Activated naive CD4-positive, alpha-beta T cell treated with anti-CD3 and anti-CD28 coated beads for 36 hours (primary cell): ENCODE measurements at regions of chr3 and their contacts with region 1.

Region 1: GRCh38 chr3:160027541-160028195 is 39.0 kb downstream of the IL12A start:
- DNase-seq: peak; percentile 24
- H3K4me3 Mint-ChIP-seq: no peak overlapping the region
- H3K27ac Mint-ChIP-seq: peak overlapping the region; percentile 32
- H3K4me1 Mint-ChIP-seq: peaks cover 12% of the 10 kb centered on the region
- H3K27me3 Mint-ChIP-seq: no peaks in the 10 kb centered on the region

Region 2: GRCh38 chr3:159978353-159978752 is 49.3 kb before region 1 on chr3:
- CTCF ChIA-PET with region 1: no interaction called
- intact Hi-C with region 1: no loop called
- DNase-seq: no peak
- H3K4me3 Mint-ChIP-seq: no peak overlapping the region
- H3K27ac Mint-ChIP-seq: no peak overlapping the region
- H3K4me1 Mint-ChIP-seq: no peaks in the 10 kb centered on the region
- H3K27me3 Mint-ChIP-seq: peaks cover 17% of the 10 kb centered on the region

Region 3: GRCh38 chr3:160129459-160130061 is 101.9 kb after region 1 on chr3:
- CTCF ChIA-PET with region 1: interaction called, 4 read pairs
- intact Hi-C with region 1: loop called (anchors 2 kb)
- DNase-seq: no peak
- H3K4me3 Mint-ChIP-seq: no peak overlapping the region
- H3K27ac Mint-ChIP-seq: no peak overlapping the region
- H3K4me1 Mint-ChIP-seq: no peaks in the 10 kb centered on the region
- H3K27me3 Mint-ChIP-seq: peaks cover 6% of the 10 kb centered on the region

Region 4: DNA sequence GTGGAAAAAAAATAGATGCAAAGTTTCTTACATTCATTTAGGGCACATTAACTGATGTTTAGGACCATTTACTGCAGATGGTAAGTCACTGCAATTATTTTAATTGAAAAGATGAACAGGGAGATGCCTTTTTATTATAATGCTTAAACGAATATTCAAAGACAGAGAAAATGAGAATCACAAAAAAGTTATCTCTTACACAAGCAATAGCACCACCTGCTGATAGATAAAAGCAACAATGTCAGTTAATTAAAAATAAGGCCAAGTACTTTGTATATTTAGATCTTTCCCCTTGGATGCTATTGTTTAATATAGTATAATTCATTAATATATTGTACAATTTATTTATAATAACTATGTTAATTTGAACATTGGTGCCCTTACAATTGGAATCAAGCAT is 315.5 kb after region 1 on chr3:
- CTCF ChIA-PET with region 1: interaction called, 7 read pairs
- intact Hi-C with region 1: loop called (anchors 1 kb)
- DNase-seq: no peak
- H3K4me3 Mint-ChIP-seq: no peak overlapping the region
- H3K27ac Mint-ChIP-seq: no peak overlapping the region
- H3K4me1 Mint-ChIP-seq: no peaks in the 10 kb centered on the region
- H3K27me3 Mint-ChIP-seq: no peaks in the 10 kb centered on the region

Region 5: GRCh38 chr3:160437083-160437455 is 409.4 kb after region 1 on chr3:
- CTCF ChIA-PET with region 1: no interaction called
- intact Hi-C with region 1: no loop called
- DNase-seq: no peak
- H3K4me3 Mint-ChIP-seq: no peak overlapping the region
- H3K27ac Mint-ChIP-seq: peak overlapping the region; percentile 36
- H3K4me1 Mint-ChIP-seq: peaks cover 27% of the 10 kb centered on the region
- H3K27me3 Mint-ChIP-seq: no peaks in the 10 kb centered on the region

Region 6: GRCh38 chr3:160449636-160450598 is 422.2 kb after region 1 on chr3 and contains the start of gene TRIM59:
- CTCF ChIA-PET with region 1: interaction called, 4 read pairs
- intact Hi-C with region 1: loop called (anchors 1 kb)
- DNase-seq: peak; percentile 98
- H3K4me3 Mint-ChIP-seq: peak within 1 kb of the TSS; percentile 91
- H3K27ac Mint-ChIP-seq: peak within 1 kb of the TSS; percentile 90
- H3K4me1 Mint-ChIP-seq: peaks cover 26% of the 10 kb centered on the region
- H3K27me3 Mint-ChIP-seq: no peaks in the 10 kb centered on the region
- total RNA-seq, gene TRIM59: 25.8 TPM

Region 7: GRCh38 chr3:160565442-160566403 is 538.1 kb after region 1 on chr3 and contains the start of gene KPNA4:
- CTCF ChIA-PET with region 1: no interaction called
- intact Hi-C with region 1: loop called (anchors 5 kb)
- DNase-seq: peak; percentile 97
- H3K4me3 Mint-ChIP-seq: peak within 1 kb of the TSS; percentile 93
- H3K27ac Mint-ChIP-seq: peak within 1 kb of the TSS; percentile 97
- H3K4me1 Mint-ChIP-seq: peaks cover 40% of the 10 kb centered on the region
- H3K27me3 Mint-ChIP-seq: no peaks in the 10 kb centered on the region
- total RNA-seq, gene KPNA4: 43.2 to 59.4 TPM